Dorsolateral prefrontal cortex (tissue), 120 donors: ENCODE measurements at regions of chr1 and their contacts with region 1.

Region 1: GRCh38 chr1:100132566-100133477 is at the starts of genes SASS6 and TRMT13:
- DNase-seq: peak; percentile 96 to 98 (median 97)
- H3K4me3 ChIP-seq: peak within 1 kb of the TSS; percentile 65 to 97 (median 88)
- H3K27ac ChIP-seq: peak within 1 kb of the TSS in 56 of 59 donors; percentile 1 to 90 (median 82)
- H3K27me3 ChIP-seq: no peaks in the 10 kb centered on the region
- CTCF ChIP-seq: peak in 34 of 56 donors; percentile 2 to 54 (median 35)
- total RNA-seq, gene SASS6: 1.5 to 4.7 (median 3.1) TPM
- total RNA-seq, gene TRMT13: 7.5 to 30.3 (median 15.5) TPM

Region 2: GRCh38 chr1:99808391-99809115 is 324.3 kb before region 1 on chr1:
- intact Hi-C with region 1: loop called (anchors 10 kb)
- DNase-seq: peak in 1 of 10 donors; percentile 8
- H3K4me3 ChIP-seq: peak overlapping the region in 30 of 59 donors; percentile 3 to 46 (median 24)
- H3K27ac ChIP-seq: peak overlapping the region in 1 of 59 donors; percentile 24
- H3K27me3 ChIP-seq: peaks cover 0 to 14% (median 0%) of the 10 kb centered on the region in 45 donors
- CTCF ChIP-seq: peak; percentile 64 to 90 (median 77)

Region 3: DNA sequence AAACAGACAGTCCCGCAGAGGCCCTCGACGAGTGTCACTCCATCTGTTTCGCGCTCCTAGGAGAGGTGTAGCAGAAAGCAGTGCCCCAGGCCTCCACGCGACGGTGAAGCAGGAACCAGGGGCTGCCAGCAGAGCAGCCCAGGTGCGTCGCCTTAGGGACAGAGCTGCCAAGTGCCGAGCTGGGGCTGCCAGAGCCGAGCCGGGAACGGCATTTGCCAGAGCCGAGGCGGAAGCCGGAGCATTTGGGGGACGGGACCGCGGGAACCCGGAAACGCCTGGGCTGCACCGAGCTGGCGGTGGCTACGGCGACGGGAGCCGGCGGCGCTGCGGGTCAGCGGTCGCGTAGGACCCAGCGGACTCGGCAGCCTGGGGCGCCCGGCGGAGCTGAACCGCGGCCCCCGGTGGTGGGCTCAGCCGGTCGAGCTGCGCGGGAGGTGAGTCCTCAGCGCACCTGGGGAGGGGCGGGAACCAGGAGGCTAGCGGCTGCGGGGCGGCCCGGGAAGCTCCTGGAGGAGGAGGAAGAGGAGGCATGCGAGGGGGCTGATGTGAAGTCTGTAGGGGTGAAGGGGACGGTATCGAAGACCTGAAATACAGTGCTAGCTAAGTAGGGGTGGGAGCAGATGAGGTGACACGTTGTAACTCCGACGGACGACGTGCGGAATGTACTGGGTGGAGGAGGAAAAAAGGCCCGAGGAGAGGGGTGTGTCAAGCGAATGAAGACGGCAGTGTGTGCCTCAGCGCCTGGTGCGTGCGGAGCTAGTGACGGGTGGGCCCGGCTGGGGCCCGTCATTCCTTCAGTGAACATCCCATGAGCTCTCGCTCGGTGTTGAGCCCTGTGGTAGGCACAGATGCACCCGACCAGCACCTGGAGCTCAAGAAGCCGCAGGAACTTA is 162.8 kb before region 1 on chr1 and contains the start of gene SLC35A3:
- intact Hi-C with region 1: loop called in 1 of 2 experiments (anchors 5 kb)
- DNase-seq: peak; percentile 61 to 90 (median 76)
- H3K4me3 ChIP-seq: peak within 1 kb of the TSS; percentile 59 to 98 (median 89)
- H3K27ac ChIP-seq: peak within 1 kb of the TSS in 54 of 59 donors; percentile 26 to 91 (median 74)
- H3K27me3 ChIP-seq: no peaks in the 10 kb centered on the region
- CTCF ChIP-seq: peak in 18 of 56 donors; percentile 2 to 34 (median 24)
- total RNA-seq, gene SLC35A3: 8.8 to 24.9 (median 17.4) TPM

Region 4: GRCh38 chr1:100249537-100250257 is 116.9 kb after region 1 on chr1 and contains the start of gene DBT:
- intact Hi-C with region 1: loop called in 1 of 2 experiments (anchors 5 kb)
- DNase-seq: peak; percentile 86 to 98 (median 97)
- H3K4me3 ChIP-seq: peak within 1 kb of the TSS; percentile 52 to 100 (median 90)
- H3K27ac ChIP-seq: peak within 1 kb of the TSS; percentile 35 to 95 (median 87)
- H3K27me3 ChIP-seq: no peaks in the 10 kb centered on the region
- CTCF ChIP-seq: peak in 30 of 56 donors; percentile 6 to 56 (median 26)
- total RNA-seq, gene DBT: 13.7 to 27.3 (median 20.7) TPM

Region 5: DNA sequence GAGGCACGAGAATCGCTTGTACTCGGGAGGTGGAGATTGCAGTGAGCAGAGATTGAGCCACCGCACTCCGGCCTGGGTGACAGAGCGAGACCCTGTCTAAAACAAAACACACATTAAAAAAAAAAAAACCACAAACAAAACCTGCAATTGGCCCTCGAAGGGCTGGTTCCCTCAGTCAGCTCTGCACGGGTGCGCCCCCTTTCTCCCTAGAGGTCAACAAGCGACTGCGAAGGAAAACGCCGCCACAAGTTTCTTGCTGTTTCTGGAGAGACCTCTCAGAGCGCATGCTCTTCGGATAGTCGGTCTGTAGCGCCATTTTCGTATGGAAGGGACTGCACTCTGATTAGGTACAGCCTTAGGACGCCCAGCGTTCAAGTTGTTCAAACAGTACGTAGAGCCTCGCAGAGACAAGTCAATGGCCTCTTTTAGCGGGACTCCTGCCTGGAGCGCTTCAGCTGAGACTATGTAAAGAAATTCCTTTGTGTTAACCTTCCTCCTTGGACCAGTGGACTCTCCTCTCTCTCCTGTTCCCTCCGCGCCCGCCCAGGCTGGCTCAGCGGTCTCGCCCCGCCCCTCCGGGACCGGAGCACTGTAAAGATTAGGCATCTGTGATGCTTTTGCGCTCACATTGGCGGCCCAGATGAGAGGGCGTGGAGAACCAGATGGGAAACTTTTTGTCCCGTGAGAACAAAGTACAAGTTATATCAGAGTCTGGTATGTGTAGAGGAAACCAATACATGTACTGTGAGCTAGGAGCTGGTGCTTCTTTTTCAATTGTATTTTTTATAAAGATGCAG is 218.5 kb after region 1 on chr1:
- intact Hi-C with region 1: loop called in 1 of 2 experiments (anchors 10 kb)
- DNase-seq: peak; percentile 23 to 82 (median 76)
- H3K4me3 ChIP-seq: peak overlapping the region; percentile 63 to 94 (median 87)
- H3K27ac ChIP-seq: peak overlapping the region in 58 of 59 donors; percentile 47 to 91 (median 82)
- H3K27me3 ChIP-seq: no peaks in the 10 kb centered on the region
- CTCF ChIP-seq: peak in 54 of 56 donors; percentile 21 to 71 (median 52)